IMR-90 (cell line): ENCODE measurements at regions of chr5 and their contacts with region 1.

Region 1: DNA sequence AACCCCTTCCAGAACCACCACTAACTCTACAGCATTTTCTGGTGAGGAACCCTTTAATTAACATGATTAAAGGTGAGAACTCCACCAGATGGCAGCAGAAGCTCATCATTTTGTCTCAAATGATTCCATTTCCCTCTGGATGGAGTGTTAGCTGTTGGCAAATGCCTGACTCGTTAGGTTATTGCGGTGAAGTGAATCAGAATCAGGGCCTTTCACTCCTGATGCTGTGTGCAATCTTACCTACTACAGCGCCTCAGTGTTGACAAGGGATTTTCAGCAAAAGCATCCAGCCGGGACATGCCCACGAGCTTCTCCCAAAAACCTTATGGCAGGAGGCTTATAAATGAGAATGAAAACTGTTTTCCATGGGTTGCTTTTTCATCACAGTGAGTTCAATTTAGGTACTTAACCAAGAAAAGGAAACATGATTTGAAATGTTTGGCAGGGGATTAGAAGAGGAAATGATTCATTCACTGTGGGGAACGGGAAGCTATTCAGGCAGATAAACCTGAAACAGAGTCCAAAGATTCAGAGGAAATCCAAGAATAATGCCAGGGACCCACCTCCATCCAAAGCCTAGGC is 48.0 kb upstream of the CAST start:
- DNase-seq: peak; percentile 96
- ATAC-seq: peak; percentile 94
- H3K4me3 ChIP-seq: peak overlapping the region; percentile 1; the same call in 1 of the 2 replicates
- H3K27ac ChIP-seq: peak overlapping the region; percentile 44
- H3K4me1 ChIP-seq: no peaks in the 10 kb centered on the region; the same call in 1 of the 2 replicates
- H3K27me3 ChIP-seq: no peaks in the 10 kb centered on the region
- CTCF ChIP-seq: peak; percentile 71
- POLR2A ChIP-seq: no peak
- RAD21 ChIP-seq: peak; percentile 91

Region 2: DNA sequence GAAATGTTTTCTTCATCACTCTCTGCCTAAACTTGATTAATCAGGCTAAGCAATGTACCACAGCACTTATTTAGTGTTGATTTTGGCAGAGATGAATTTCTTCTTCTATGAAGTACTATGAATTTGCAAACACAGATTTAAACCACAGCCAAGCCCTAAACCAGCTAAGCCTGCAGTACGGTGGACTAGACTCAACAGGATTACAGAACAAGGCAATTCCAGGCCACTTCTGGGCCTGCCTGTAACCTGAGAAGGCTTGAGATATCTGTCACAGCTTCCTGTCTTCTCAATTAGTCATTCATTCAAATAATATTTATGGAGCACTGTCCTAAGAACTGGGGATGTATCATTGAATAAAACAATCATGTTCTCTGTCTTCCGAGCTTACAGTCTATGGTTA is 15.6 kb after region 1 on chr5:
- CTCF ChIA-PET with region 1: no interaction called
- POLR2A ChIA-PET with region 1: no interaction called
- dilution Hi-C with region 1: no loop called
- in situ Hi-C with region 1: no loop called
- intact Hi-C with region 1: no loop called
- DNase-seq: peak; percentile 89
- ATAC-seq: peak; percentile 81
- H3K4me3 ChIP-seq: no peak overlapping the region
- H3K27ac ChIP-seq: no peak overlapping the region
- H3K4me1 ChIP-seq: peaks cover 25% of the 10 kb centered on the region
- H3K27me3 ChIP-seq: no peaks in the 10 kb centered on the region
- CTCF ChIP-seq: no peak
- POLR2A ChIP-seq: no peak
- RAD21 ChIP-seq: no peak

Region 3: GRCh38 chr5:96662725-96663513 is 48.7 kb after region 1 on chr5:
- CTCF ChIA-PET with region 1: interaction called, 14 read pairs
- POLR2A ChIA-PET with region 1: no interaction called
- dilution Hi-C with region 1: no loop called
- in situ Hi-C with region 1: no loop called
- intact Hi-C with region 1: loop called (anchors 1 kb)
- DNase-seq: peak; percentile 79
- ATAC-seq: peak; percentile 86
- H3K4me3 ChIP-seq: peak overlapping the region; percentile 92
- H3K27ac ChIP-seq: peak overlapping the region; percentile 90
- H3K4me1 ChIP-seq: peaks cover 1% of the 10 kb centered on the region; the same call in 1 of the 2 replicates
- H3K27me3 ChIP-seq: no peaks in the 10 kb centered on the region
- CTCF ChIP-seq: no peak
- POLR2A ChIP-seq: peak; percentile 58; the same call in 1 of the 2 replicates
- RAD21 ChIP-seq: no peak

Region 4: DNA sequence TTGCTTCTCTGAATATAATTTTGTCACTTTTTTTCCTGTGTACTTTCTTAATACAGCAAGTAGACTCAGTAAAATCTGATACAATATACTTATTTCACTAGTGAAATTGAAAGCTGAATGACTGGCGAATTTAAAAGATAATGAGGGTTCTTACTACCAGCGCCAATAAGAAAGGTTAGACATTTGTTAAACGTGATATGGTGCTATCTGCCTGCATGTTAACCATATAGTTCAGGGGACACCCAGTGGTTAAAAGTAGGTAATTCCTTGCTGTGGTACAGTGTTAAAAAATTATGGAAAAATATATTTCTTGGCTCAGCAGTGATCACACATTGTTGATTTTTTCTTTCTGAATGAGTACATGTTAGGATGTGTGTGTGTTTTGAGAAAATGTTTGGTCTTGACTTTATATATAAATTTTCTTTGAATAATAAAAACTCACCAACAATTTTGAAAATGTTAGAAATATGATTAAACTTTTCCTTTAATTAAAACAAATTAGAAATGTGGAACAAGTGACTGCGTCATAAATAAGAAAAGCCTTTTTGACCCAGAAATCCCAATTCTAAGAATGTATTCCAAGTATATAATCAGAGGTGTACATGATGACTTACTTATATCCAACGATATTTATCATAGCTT is 73.7 kb after region 1 on chr5:
- CTCF ChIA-PET with region 1: interaction called, 14 read pairs
- POLR2A ChIA-PET with region 1: no interaction called
- dilution Hi-C with region 1: no loop called
- in situ Hi-C with region 1: loop called (anchors 10 kb)
- intact Hi-C with region 1: loop called (anchors 1 kb)
- DNase-seq: peak; percentile 76
- ATAC-seq: peak; percentile 79
- H3K4me3 ChIP-seq: no peak overlapping the region
- H3K27ac ChIP-seq: no peak overlapping the region
- H3K4me1 ChIP-seq: peaks cover 7% of the 10 kb centered on the region
- H3K27me3 ChIP-seq: no peaks in the 10 kb centered on the region
- CTCF ChIP-seq: peak; percentile 78
- POLR2A ChIP-seq: no peak
- RAD21 ChIP-seq: peak; percentile 85

Region 5: DNA sequence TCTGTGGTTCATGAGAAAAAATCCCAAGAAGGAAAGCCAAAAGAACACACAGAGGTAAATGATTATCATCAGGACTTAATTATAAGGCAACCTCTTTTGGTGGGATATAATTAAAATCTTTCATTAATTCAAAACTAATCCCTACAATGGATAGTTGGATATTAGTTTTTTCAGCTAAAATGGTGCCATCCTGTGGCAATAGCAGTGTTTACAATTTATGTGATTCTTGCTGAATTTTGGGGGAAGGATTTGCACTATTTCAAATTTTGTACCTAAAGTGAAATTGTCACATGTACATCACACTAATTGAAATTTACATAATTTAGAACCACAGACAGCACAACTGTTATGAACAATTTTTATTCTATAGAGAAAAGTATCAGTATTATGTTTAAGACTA is 115.0 kb after region 1 on chr5:
- CTCF ChIA-PET with region 1: no interaction called
- POLR2A ChIA-PET with region 1: no interaction called
- dilution Hi-C with region 1: no loop called
- in situ Hi-C with region 1: no loop called
- intact Hi-C with region 1: loop called (anchors 1 kb)
- DNase-seq: no peak
- ATAC-seq: no peak; the same call in 1 of the 2 replicates
- H3K4me3 ChIP-seq: no peak overlapping the region
- H3K27ac ChIP-seq: no peak overlapping the region
- H3K4me1 ChIP-seq: no peaks in the 10 kb centered on the region; the same call in 1 of the 2 replicates
- H3K27me3 ChIP-seq: no peaks in the 10 kb centered on the region
- CTCF ChIP-seq: peak; percentile 35; the same call in 1 of the 2 replicates
- POLR2A ChIP-seq: no peak
- RAD21 ChIP-seq: peak; percentile 46

Region 6: DNA sequence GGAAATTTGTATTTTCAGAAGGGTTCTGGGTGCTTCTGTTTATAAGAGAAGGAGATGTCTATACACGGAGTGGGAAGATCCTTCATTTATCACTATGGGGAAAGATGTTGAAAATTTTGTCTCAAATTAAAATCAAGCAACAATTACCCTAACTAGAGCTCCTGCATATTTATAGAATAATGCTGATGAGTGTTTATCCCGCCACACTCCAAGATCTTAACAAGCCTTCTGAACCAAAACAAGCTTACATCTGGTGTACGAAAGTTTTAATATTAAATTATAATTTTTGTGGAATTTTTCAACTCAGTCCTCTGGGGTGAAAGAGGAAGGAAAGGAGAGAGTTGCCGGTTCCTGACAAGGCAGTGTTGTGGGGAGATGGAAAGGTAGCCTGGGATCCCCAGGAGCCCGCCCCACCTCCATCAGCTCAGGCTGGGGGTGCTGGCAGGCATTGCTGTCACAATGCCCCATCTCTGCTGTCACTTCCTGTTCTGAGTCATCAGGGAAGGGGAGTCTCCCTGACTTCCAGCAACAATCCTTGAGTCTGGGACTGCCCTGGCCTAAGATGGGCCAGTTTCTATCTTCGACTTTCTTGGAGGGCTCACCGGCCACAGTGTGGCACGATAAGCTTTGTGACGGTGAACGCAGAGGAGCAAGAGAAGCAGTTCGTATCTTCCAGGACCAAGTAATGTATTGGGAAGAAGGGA is 129.0 kb after region 1 on chr5:
- CTCF ChIA-PET with region 1: no interaction called
- POLR2A ChIA-PET with region 1: no interaction called
- dilution Hi-C with region 1: no loop called
- in situ Hi-C with region 1: loop called (anchors 10 kb)
- intact Hi-C with region 1: no loop called
- DNase-seq: peak; percentile 61
- ATAC-seq: peak; percentile 61
- H3K4me3 ChIP-seq: no peak overlapping the region
- H3K27ac ChIP-seq: 0 out of 2 replicates have a peak overlapping the region, but pooled peaks have one; percentile 17
- H3K4me1 ChIP-seq: peaks cover 6% of the 10 kb centered on the region
- H3K27me3 ChIP-seq: no peaks in the 10 kb centered on the region
- CTCF ChIP-seq: no peak
- POLR2A ChIP-seq: no peak
- RAD21 ChIP-seq: no peak

Region 7: GRCh38 chr5:96752341-96753016 is 138.3 kb after region 1 on chr5:
- CTCF ChIA-PET with region 1: interaction called, 4 read pairs
- POLR2A ChIA-PET with region 1: no interaction called
- dilution Hi-C with region 1: no loop called
- in situ Hi-C with region 1: loop called (anchors 10 kb)
- intact Hi-C with region 1: loop called (anchors 5 kb)
- DNase-seq: peak; percentile 69
- ATAC-seq: peak; percentile 44; the same call in 1 of the 2 replicates
- H3K4me3 ChIP-seq: no peak overlapping the region
- H3K27ac ChIP-seq: no peak overlapping the region
- H3K4me1 ChIP-seq: peaks cover 1% of the 10 kb centered on the region
- H3K27me3 ChIP-seq: no peaks in the 10 kb centered on the region
- CTCF ChIP-seq: peak; percentile 76
- POLR2A ChIP-seq: no peak
- RAD21 ChIP-seq: peak; percentile 68

Region 8: GRCh38 chr5:96868603-96869371 is 254.6 kb after region 1 on chr5:
- CTCF ChIA-PET with region 1: no interaction called
- POLR2A ChIA-PET with region 1: no interaction called
- dilution Hi-C with region 1: no loop called
- in situ Hi-C with region 1: no loop called
- intact Hi-C with region 1: loop called (anchors 10 kb)
- DNase-seq: peak; percentile 82
- ATAC-seq: peak; percentile 99
- H3K4me3 ChIP-seq: no peak overlapping the region
- H3K27ac ChIP-seq: no peak overlapping the region
- H3K4me1 ChIP-seq: no peaks in the 10 kb centered on the region
- H3K27me3 ChIP-seq: no peaks in the 10 kb centered on the region
- CTCF ChIP-seq: peak; percentile 97
- POLR2A ChIP-seq: no peak
- RAD21 ChIP-seq: peak; percentile 95